ENCODE measurements at regions of chr7 and their contacts with region 1.

Region 1: DNA sequence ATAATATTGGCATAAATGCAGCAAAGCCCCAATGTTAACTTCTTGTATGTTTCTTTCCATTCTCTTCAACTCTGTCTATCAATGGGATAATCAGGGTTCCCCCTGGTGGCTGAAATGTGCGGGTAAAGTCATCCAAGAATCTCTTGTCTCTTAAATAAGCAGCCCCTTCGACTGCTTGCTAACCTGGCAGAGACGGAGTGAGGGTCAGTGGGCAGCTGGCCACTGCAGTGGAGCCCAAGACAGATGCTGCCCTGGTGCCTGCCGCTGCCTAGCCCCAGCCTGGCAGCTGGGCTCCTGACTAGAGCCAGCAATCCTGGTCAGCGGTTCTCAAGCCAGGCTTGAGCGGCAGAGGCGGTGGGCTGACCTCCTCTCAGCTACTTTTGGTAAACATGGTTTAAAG is 248.9 kb downstream of the COBL start:
- DNase-seq: peak; percentile 85
- ATAC-seq: peak; percentile 65
- H3K4me3 ChIP-seq: no peak overlapping the region
- H3K27ac ChIP-seq: no peak overlapping the region
- H3K4me1 ChIP-seq: peaks cover 28% of the 10 kb centered on the region
- H3K27me3 ChIP-seq: no peaks in the 10 kb centered on the region
- CTCF ChIP-seq: peak; percentile 90

Region 2: DNA sequence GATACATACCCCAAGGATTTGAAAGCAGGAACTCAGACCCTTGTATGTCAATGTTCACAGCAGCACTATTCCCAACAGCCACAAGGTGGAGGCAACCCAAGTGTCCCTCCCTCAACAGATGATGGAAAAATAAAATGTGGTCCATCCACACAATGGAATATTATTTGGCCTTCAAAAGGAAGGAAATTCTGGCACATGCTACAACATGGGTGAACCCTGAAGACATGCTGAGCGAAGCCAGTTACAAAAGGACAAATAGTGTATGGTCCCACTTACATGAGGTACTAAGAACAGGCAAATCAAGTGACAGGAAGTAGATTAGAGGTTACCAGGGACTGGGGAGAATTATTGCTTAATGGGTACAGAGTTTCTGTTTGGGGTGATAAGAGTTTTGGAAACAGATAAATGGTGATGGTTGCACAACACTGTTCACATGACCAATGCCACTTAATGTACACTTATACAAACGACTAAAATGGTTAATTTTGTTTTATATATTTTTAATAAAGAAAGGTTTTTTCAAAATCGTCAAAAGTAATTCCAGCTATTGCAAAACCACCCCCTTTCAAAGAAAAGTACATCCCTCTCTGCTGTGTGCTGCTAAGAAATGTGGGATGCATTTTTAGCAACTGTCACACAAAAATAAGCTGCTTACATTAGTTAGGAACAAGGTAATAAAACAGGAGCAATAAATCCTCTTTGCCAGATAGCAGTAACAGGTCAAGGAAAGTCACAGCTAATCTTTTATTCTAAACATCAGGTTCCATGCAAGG is 370.8 kb before region 1 on chr7:
- CTCF ChIA-PET with region 1: no interaction called
- POLR2A ChIA-PET with region 1: no interaction called
- intact Hi-C with region 1: loop called (anchors 10 kb)
- DNase-seq: peak; percentile 46
- ATAC-seq: peak; percentile 53; the same call in 1 of the 2 replicates
- H3K4me3 ChIP-seq: no peak overlapping the region
- H3K27ac ChIP-seq: no peak overlapping the region
- H3K4me1 ChIP-seq: no peaks in the 10 kb centered on the region
- H3K27me3 ChIP-seq: no peaks in the 10 kb centered on the region
- CTCF ChIP-seq: peak; percentile 73

Region 3: GRCh38 chr7:50793115-50793946 is 274.4 kb before region 1 on chr7:
- CTCF ChIA-PET with region 1: no interaction called
- POLR2A ChIA-PET with region 1: no interaction called
- intact Hi-C with region 1: loop called (anchors 1 kb)
- DNase-seq: peak; percentile 61
- ATAC-seq: peak; percentile 67
- H3K4me3 ChIP-seq: peak overlapping the region; percentile 65
- H3K27ac ChIP-seq: peak overlapping the region; percentile 36; the same call in 1 of the 2 replicates
- H3K4me1 ChIP-seq: peaks cover 15% of the 10 kb centered on the region
- H3K27me3 ChIP-seq: no peaks in the 10 kb centered on the region
- CTCF ChIP-seq: no peak

Region 4: GRCh38 chr7:50962962-50963374 is 104.8 kb before region 1 on chr7:
- CTCF ChIA-PET with region 1: no interaction called
- POLR2A ChIA-PET with region 1: interaction called, 7 read pairs
- intact Hi-C with region 1: loop called (anchors 5 kb)
- DNase-seq: peak; percentile 97
- ATAC-seq: peak; percentile 97
- H3K4me3 ChIP-seq: peak overlapping the region; percentile 35; the same call in 1 of the 2 replicates
- H3K27ac ChIP-seq: peak overlapping the region; percentile 88
- H3K4me1 ChIP-seq: peaks cover 19% of the 10 kb centered on the region
- H3K27me3 ChIP-seq: no peaks in the 10 kb centered on the region
- CTCF ChIP-seq: no peak

Region 5: GRCh38 chr7:51154201-51154600 is 86.4 kb after region 1 on chr7:
- CTCF ChIA-PET with region 1: no interaction called
- POLR2A ChIA-PET with region 1: no interaction called
- intact Hi-C with region 1: no loop called
- DNase-seq: no peak
- ATAC-seq: no peak
- H3K4me3 ChIP-seq: no peak overlapping the region
- H3K27ac ChIP-seq: no peak overlapping the region
- H3K4me1 ChIP-seq: no peaks in the 10 kb centered on the region
- H3K27me3 ChIP-seq: no peaks in the 10 kb centered on the region
- CTCF ChIP-seq: no peak

Measured in PC-3 (cell line).